IMR-90 (cell line): ENCODE measurements at regions of chr1 and their contacts with region 1.

Region 1: GRCh38 chr1:159686599-159687299 is 27.6 kb downstream of the CRP start:
- DNase-seq: no peak
- ATAC-seq: no peak
- H3K4me3 ChIP-seq: no peak overlapping the region
- H3K27ac ChIP-seq: no peak overlapping the region
- H3K4me1 ChIP-seq: no peaks in the 10 kb centered on the region
- H3K27me3 ChIP-seq: no peaks in the 10 kb centered on the region
- CTCF ChIP-seq: no peak
- POLR2A ChIP-seq: no peak
- RAD21 ChIP-seq: no peak

Region 2: GRCh38 chr1:159705904-159706256 is 19.1 kb after region 1 on chr1:
- CTCF ChIA-PET with region 1: no interaction called
- POLR2A ChIA-PET with region 1: no interaction called
- dilution Hi-C with region 1: no loop called
- in situ Hi-C with region 1: no loop called
- intact Hi-C with region 1: loop called (anchors 2 kb)
- DNase-seq: no peak
- ATAC-seq: no peak
- H3K4me3 ChIP-seq: no peak overlapping the region
- H3K27ac ChIP-seq: no peak overlapping the region
- H3K4me1 ChIP-seq: no peaks in the 10 kb centered on the region
- H3K27me3 ChIP-seq: no peaks in the 10 kb centered on the region; the same call in 1 of the 2 replicates
- CTCF ChIP-seq: no peak
- POLR2A ChIP-seq: no peak
- RAD21 ChIP-seq: no peak